ENCODE measurements at regions of chrX and their contacts with region 1.

Region 1: DNA sequence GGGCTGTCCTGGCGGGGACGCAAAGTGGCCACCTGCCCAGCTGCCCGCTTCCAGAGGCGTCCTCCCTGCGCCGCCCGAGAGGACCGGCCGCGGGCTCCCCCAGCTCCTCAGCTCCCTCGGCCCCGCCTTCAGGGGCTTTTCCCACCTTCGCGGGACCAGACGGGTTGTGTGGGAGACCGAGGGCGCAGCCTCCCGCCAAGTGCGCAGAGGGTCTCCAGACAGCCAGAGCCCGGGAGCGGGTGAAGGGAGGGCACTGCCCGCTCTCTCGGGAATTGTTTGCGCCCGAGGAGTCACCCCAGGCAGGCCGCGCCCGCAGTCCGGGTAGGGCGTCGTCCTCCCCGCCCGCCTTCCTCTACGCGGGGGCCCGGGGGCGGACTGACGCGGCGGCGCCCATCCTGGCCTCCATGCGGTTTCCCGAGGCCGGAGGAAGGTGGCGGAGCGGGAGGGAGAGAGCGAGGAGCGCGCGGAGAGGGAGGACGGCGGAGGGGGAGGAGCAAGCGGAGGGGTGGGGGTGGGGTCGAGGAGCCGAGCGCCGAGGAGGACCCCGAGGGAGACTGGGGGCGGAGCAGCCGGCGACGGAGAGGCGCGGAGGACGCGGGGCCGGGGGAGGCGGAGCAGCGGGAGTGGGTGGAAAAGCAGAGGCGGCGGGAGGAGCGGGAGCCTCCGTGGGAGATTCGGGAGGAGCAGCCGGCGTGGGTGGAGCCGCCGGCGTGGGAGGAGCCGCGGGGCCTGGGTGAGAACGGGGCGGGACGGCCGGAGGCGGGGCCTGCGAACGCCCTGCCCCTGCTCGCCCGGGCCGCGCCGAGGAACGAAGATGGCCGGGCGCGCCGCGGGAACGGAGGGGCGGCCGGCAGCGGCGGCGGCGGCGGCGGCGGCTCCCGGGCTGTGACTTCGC is 47.6 kb downstream of the CLDN34 start:
- DNase-seq: peak; percentile 71
- H3K4me3 Mint-ChIP-seq: peak overlapping the region; percentile 67
- H3K27ac Mint-ChIP-seq: peak overlapping the region; percentile 30
- H3K4me1 Mint-ChIP-seq: peaks cover 35% of the 10 kb centered on the region
- H3K27me3 Mint-ChIP-seq: peaks cover 4% of the 10 kb centered on the region

Region 2: DNA sequence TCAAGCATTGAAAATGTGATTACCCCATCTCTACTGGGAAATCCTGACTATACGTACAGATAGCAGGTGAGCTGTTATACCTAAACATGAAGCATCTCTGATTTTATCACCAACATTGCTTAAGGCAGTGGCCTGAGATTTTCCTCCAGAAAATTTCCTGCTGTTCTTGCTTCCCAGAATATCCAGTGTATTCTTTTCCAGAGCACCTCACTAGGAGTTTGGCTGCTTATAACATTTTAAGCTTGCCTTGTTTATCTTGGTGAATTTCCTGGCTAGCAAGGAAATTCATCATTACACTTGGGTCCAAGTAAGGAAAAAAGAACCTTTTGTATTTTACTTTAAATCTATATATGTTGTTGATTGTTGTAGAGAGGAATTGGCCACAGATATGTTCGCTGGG is 69.1 kb after region 1 on chrX:
- CTCF ChIA-PET with region 1: interaction called, 8 read pairs
- intact Hi-C with region 1: loop called (anchors 2 kb)
- DNase-seq: no peak
- H3K4me3 Mint-ChIP-seq: no peak overlapping the region
- H3K27ac Mint-ChIP-seq: no peak overlapping the region
- H3K4me1 Mint-ChIP-seq: peaks cover 34% of the 10 kb centered on the region
- H3K27me3 Mint-ChIP-seq: no peaks in the 10 kb centered on the region

Region 3: DNA sequence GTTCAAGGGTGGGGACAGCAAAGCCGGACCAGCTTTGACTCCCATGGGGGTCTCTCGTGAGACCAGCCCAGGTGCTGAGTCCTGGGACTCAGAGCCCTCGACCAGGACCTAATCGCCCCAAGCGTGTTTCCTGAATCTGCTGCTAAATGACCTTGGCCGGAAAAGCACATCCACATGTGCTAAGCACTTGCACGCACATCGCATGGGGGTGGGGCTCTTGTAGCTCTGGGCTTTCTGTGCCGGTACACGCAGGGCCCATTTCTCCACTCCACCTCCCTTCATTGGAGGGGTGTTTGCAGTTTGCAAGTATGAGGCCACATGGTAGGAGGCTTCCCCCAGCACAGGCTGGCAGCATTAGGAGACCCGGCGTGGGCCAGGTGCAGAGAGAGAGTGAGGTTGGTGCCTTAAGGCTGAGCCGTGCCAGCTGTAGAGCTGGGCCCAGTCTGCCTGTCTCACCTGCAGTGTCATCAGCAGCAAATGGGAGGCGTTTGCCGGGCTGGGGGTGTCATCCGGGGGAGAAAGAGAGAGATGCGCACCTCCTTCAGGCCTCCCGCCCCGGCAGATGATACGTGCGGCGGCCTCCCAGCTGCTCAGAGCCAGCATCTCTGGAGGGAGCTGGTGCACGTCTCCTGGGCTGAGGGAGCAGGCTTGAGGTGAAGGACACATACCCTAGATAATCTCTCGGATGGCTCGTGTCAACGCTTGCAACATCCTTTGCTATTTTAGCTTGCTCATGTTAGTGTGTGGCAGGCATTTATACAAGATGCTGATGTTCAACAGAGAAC is 96.8 kb after region 1 on chrX:
- CTCF ChIA-PET with region 1: interaction called, 5 read pairs
- intact Hi-C with region 1: loop called (anchors 2 kb)
- DNase-seq: peak; percentile 59
- H3K4me3 Mint-ChIP-seq: peak overlapping the region; percentile 64
- H3K27ac Mint-ChIP-seq: peak overlapping the region; percentile 91
- H3K4me1 Mint-ChIP-seq: peaks cover 56% of the 10 kb centered on the region
- H3K27me3 Mint-ChIP-seq: no peaks in the 10 kb centered on the region

Region 4: DNA sequence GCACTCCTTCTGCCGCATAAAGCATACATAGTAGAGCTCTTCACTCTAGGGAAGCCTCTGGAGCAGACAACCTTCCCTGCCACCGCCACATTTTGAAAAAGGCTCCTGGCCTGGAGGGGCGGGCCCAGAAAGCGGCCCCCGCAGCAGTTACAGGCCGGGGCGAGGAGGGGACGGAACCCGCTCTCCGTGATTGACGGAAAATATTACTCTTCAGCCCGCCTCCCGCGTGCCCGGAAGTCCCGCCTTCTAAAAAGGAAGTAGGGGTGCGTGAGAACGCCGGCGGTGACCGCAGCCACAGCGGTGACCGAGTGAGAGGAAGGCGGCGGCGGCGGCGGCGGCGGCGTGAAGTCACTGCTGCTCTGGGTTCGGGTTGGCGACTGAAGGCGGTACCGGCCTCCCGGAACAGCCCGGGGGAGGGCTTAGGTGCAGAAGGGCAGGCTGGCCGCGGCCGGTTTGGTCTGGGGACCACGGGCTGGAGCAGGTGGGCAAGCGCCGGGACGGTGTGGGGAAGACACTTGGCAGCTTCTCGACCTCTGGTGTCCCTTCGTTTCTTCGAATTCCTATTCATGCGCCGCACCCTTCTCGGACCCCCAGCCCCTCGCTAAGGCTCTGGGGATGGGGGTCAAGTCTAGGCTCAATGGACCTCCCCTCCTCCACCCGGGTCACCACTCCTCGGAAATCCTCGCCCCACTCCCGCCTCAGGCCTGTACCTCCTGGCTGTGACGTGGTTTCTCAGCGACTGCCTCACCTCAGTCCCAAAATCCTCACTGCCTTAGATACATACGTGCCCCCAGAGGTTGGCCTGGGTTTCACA is 1096.5 kb after region 1 on chrX and contains the start of gene HCCS:
- CTCF ChIA-PET with region 1: no interaction called
- intact Hi-C with region 1: loop called (anchors 5 kb)
- DNase-seq: peak; percentile 88
- H3K4me3 Mint-ChIP-seq: no peak within 1 kb of the TSS
- H3K27ac Mint-ChIP-seq: peak within 1 kb of the TSS; percentile 93
- H3K4me1 Mint-ChIP-seq: peaks cover 19% of the 10 kb centered on the region
- H3K27me3 Mint-ChIP-seq: no peaks in the 10 kb centered on the region
- total RNA-seq, gene HCCS: 19.2 to 19.5 TPM

Region 5: GRCh38 chrX:11758400-11759171 is 1743.9 kb after region 1 on chrX:
- CTCF ChIA-PET with region 1: no interaction called
- intact Hi-C with region 1: loop called (anchors 10 kb)
- DNase-seq: peak; percentile 89
- H3K4me3 Mint-ChIP-seq: peak overlapping the region; percentile 94
- H3K27ac Mint-ChIP-seq: peak overlapping the region; percentile 100
- H3K4me1 Mint-ChIP-seq: peaks cover 20% of the 10 kb centered on the region
- H3K27me3 Mint-ChIP-seq: no peaks in the 10 kb centered on the region